GM12878 (cell line): ENCODE measurements at regions of chr9 and their contacts with region 1.

Region 1: DNA sequence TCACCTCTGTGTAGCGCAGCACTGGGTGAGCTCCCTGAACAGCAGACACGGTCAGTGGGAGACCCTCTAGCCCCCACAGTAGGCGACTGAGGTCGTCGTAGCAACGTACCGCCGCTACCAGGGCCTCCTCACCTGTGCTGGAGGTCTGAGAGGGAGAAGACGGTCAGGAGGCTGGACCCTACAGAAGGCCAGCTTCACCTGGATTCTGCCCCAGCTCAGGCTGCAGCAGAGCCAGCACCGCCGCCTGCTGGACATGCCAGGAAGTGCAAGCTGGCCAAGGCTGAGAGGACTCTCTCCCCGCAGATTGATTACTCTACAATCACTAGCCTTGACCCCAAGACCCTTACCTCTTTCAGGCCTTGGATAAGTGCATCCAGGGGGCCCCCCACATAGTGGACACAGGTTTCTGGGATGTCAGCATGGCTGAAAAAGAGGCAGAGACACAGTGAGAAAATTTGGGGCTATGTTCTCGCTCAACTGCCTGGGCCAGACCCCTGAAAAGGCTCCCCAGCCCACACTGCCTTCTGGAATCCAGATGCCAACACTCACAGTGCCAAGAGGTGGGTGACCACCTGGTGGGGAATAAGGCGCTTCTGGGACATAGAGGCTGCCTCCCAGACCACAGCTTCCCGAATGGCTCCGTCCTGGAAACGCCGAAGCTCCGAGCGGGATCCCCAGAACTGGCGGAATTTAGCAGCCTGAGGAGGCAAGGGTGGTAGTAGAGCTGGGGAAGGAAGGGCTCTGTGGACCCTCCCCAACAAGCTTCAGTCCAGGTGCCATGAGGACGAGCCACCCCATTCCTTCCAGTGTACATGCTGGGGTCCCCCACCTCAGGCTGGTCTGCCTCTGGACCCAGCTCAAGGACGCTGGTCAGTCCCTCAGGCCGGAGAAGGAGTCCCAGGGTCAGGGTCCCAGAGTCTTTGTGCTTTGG is 6.9 kb downstream of the NOL6 start:
- DNase-seq: no peak
- ATAC-seq: peak; percentile 91
- H3K4me3 ChIP-seq: no peak overlapping the region
- H3K27ac ChIP-seq: no peak overlapping the region
- H3K4me1 ChIP-seq: peaks cover under 1% of the 10 kb centered on the region
- H3K27me3 ChIP-seq: no peaks in the 10 kb centered on the region
- CTCF ChIP-seq: peak; percentile 81 to 99 (median 98)
- EP300 ChIP-seq: no peak
- POLR2A ChIP-seq: no peak
- RAD21 ChIP-seq: peak; percentile 84

Region 2: DNA sequence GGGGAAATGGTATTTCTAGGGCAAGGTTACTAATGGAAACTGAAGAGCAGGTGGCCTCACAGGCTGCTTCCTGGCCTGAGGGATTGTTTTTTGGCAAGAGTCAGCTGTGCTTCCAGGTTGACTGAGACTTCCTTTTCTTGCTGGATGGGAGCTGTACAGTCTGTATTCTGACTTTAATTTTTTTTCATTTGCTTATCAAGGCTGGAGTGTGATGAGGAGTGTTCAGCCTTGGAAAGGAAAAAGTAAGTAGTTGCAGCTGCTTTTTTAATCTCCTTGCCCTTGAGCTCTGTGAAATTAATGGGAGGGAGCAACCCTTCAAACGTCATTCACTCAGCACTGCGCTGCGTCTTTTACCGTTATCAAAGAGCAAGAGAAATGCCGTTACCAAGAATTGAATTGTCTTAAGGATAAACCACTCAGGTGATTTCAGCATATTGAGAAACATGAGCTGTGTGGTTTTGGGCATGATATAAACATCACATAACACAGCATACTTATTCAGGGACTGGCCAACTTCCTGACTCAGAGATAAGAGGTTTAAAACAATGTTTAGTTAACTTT is 112.1 kb before region 1 on chr9:
- CTCF ChIA-PET with region 1: no interaction called
- POLR2A ChIA-PET with region 1: no interaction called
- RAD21 ChIA-PET with region 1: no interaction called
- SMC1A ChIA-PET with region 1: no interaction called
- in situ Hi-C with region 1: no loop called
- intact Hi-C with region 1: no loop called
- DNase-seq: no peak
- ATAC-seq: no peak
- H3K4me3 ChIP-seq: no peak overlapping the region
- H3K27ac ChIP-seq: no peak overlapping the region
- H3K4me1 ChIP-seq: no peaks in the 10 kb centered on the region
- H3K27me3 ChIP-seq: no peaks in the 10 kb centered on the region
- CTCF ChIP-seq: no peak
- EP300 ChIP-seq: no peak
- POLR2A ChIP-seq: no peak
- RAD21 ChIP-seq: no peak

Region 3: DNA sequence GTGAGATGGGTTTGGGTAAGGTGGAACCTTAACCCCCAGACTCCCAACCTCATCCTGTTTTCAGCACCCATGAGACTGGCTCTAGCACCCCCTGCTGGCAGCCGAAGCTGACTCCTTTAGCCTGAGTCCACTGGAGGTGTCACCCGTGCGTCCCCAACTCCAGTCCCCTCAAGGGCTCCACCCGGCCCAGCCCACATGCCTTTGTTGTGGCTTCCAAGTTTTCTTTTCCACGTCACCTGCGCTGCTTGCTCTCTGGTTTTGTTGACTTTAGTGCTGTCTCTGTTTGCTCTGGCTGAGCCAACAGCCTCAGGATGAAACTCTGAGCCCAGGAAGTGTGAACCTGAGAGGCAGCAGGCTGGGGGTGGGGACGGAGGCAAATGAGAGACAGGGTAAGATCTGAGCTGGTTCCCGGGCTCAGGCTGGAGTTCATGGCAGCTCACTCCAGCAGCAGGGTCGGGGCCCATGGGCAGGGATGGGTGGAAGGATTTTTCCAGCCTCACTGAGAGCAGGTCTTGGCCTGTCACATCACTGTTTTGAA is 51.3 kb before region 1 on chr9:
- CTCF ChIA-PET with region 1: interaction called, 20 read pairs
- POLR2A ChIA-PET with region 1: no interaction called
- RAD21 ChIA-PET with region 1: interaction called, 12 read pairs
- SMC1A ChIA-PET with region 1: interaction called, 8 read pairs
- in situ Hi-C with region 1: no loop called
- intact Hi-C with region 1: no loop called
- DNase-seq: peak; percentile 3
- ATAC-seq: peak; percentile 93
- H3K4me3 ChIP-seq: no peak overlapping the region
- H3K27ac ChIP-seq: no peak overlapping the region
- H3K4me1 ChIP-seq: no peaks in the 10 kb centered on the region
- H3K27me3 ChIP-seq: no peaks in the 10 kb centered on the region; a peak in 1 of 4 replicates
- CTCF ChIP-seq: peak; percentile 60 to 85 (median 78)
- EP300 ChIP-seq: no peak
- POLR2A ChIP-seq: no peak
- RAD21 ChIP-seq: peak; percentile 45

Region 4: GRCh38 chr9:33489066-33489465 is 22.2 kb after region 1 on chr9:
- CTCF ChIA-PET with region 1: interaction called, 14 read pairs
- POLR2A ChIA-PET with region 1: no interaction called
- RAD21 ChIA-PET with region 1: interaction called, 3 read pairs
- SMC1A ChIA-PET with region 1: interaction called, 4 read pairs
- in situ Hi-C with region 1: no loop called
- intact Hi-C with region 1: no loop called
- DNase-seq: no peak
- ATAC-seq: no peak
- H3K4me3 ChIP-seq: no peak overlapping the region
- H3K27ac ChIP-seq: no peak overlapping the region
- H3K4me1 ChIP-seq: no peaks in the 10 kb centered on the region
- H3K27me3 ChIP-seq: peaks cover 0 to 2% of the 10 kb centered on the region in 2 experiments; a peak in 1 of 4 replicates
- CTCF ChIP-seq: no peak
- EP300 ChIP-seq: no peak
- POLR2A ChIP-seq: no peak
- RAD21 ChIP-seq: no peak

Region 5: DNA sequence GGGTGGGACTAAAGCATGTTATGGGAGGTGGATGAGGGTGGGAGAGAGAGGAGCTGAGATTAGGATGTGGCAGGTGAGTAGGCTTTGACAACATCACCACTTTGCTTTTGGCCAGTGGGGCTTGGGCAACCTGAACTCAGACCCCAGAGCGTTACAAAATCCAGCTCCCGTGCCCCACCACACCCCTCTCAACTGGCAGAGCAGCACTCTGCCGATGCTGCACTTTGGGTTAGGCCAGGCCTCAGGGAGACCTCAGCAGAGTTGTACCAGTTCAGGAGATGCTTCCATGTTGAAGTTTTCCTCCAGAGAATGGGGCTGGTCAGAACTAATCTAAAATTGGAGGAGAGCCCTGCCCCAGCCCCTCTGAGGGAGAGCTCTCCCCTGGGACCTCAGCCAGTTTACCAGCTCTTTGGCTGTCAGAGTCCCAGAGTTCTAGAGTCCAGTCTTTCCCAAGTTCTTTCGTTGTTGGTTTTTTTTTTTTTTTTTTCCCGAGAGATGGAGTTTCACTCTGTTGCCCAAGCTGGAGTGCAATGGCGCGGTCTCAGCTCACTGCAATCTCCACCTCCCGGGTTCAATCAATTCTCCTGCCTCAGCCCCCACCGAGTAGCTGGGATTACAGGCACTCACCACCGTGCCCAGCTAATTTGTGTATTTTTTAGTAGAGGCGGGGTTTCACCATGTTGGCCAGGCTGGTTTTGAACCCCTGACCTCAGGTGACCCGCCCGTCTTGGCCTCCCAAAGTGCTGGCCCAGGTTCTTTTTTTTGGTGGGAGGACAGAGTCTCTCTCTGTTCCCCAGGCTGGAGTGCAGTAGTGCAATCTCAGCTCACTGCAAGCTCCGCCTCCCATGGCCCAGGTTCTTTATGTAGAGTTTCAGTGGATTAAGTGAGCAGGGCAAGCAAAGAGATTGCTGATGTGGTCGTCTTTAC is 880.3 kb after region 1 on chr9:
- CTCF ChIA-PET with region 1: no interaction called
- POLR2A ChIA-PET with region 1: no interaction called
- RAD21 ChIA-PET with region 1: no interaction called
- SMC1A ChIA-PET with region 1: no interaction called
- in situ Hi-C with region 1: no loop called
- intact Hi-C with region 1: no loop called
- DNase-seq: no peak
- ATAC-seq: no peak
- H3K4me3 ChIP-seq: no peak overlapping the region
- H3K27ac ChIP-seq: no peak overlapping the region
- H3K4me1 ChIP-seq: no peaks in the 10 kb centered on the region
- H3K27me3 ChIP-seq: no peaks in the 10 kb centered on the region
- CTCF ChIP-seq: no peak
- EP300 ChIP-seq: no peak
- POLR2A ChIP-seq: no peak
- RAD21 ChIP-seq: no peak